AG04450 (cell line): ENCODE measurements at regions of chr9 and their contacts with region 1.

Region 1: DNA sequence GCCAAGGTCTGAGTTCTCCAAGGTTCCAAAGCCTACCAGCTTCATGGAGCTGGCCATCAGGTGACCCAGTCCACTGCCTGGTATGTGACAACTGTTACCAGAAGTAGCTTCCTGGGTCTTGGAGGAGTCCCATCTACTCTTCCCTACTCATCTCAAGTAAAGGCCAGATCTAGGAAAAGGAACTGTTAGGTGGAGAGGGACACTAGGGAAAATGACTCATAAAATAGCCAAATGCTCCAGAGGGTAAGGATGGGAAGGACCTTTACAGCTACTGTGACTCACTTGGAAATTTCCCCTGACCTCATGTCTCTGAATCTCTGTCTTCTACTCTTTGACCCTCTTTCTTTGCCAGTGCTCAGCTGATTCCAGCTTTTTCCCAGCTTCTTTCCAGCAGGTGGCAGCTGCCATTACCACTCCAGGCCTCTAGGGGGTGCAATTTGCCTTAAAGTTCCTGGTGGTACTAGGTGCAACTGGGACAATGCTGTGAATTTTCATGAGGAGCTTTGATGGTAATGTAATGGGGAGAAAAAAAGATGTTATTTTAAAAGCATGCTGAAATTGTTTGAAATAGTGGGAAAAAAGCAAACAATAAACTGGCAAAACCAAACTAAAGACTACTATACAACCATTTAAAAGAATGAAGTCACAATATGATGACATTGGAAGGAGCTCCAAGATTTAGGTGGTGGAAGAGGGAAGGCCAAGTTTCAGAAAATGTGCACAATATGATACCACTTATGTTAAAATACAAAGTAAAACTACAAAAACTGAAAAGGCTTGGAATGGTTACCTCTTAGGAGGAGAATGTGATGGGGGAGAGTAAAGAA is 27.1 kb upstream of the MYORG start:
- DNase-seq: peak; percentile 24
- H3K4me3 ChIP-seq: no peak overlapping the region
- H3K27ac ChIP-seq: no peak overlapping the region
- H3K27me3 ChIP-seq: no peaks in the 10 kb centered on the region
- CTCF ChIP-seq: peak; percentile 99

Region 2: GRCh38 chr9:34376596-34377403 is 27.0 kb before region 1 on chr9 and contains the start of gene MYORG:
- CTCF ChIA-PET with region 1: interaction called, 11 read pairs
- POLR2A ChIA-PET with region 1: no interaction called
- DNase-seq: peak; percentile 27
- H3K4me3 ChIP-seq: peak within 1 kb of the TSS; percentile 75
- H3K27ac ChIP-seq: no peak within 1 kb of the TSS
- H3K27me3 ChIP-seq: peaks cover 28% of the 10 kb centered on the region
- CTCF ChIP-seq: no peak
- polyA plus RNA-seq, gene MYORG: 0.19 and 0.22 TPM in 2 replicates

Region 3: GRCh38 chr9:34419716-34420504 is 16.1 kb after region 1 on chr9:
- CTCF ChIA-PET with region 1: interaction called, 67 read pairs
- POLR2A ChIA-PET with region 1: no interaction called
- DNase-seq: no peak
- H3K4me3 ChIP-seq: no peak overlapping the region
- H3K27ac ChIP-seq: no peak overlapping the region
- H3K27me3 ChIP-seq: no peaks in the 10 kb centered on the region
- CTCF ChIP-seq: no peak

Region 4: GRCh38 chr9:34446468-34446891 is 42.7 kb after region 1 on chr9:
- CTCF ChIA-PET with region 1: interaction called, 44 read pairs
- POLR2A ChIA-PET with region 1: no interaction called
- DNase-seq: no peak
- H3K4me3 ChIP-seq: no peak overlapping the region
- H3K27ac ChIP-seq: no peak overlapping the region
- H3K27me3 ChIP-seq: no peaks in the 10 kb centered on the region
- CTCF ChIP-seq: no peak

Region 5: DNA sequence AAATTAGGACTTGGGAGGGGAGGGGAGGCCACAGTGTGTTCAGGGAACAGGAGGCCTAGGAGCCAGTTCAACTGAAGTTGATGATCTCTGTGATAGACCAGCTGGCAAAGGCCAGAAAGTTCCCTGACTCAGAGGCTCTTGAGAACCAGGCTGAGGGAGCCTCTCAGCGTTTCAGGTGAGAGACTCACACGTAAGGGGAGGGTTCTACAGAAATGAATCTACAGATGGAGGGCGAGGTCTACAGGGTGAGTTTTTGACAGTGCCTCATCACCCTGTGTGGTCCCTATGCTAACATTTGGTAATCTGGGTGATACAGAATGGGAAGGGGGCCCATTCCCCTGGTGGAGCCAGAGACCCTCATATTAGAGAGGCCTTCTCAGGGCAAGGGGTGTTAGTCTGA is 87.0 kb after region 1 on chr9:
- CTCF ChIA-PET with region 1: interaction called, 139 read pairs
- POLR2A ChIA-PET with region 1: no interaction called
- DNase-seq: no peak
- H3K4me3 ChIP-seq: no peak overlapping the region
- H3K27ac ChIP-seq: no peak overlapping the region
- H3K27me3 ChIP-seq: peaks cover 22% of the 10 kb centered on the region
- CTCF ChIP-seq: no peak

Region 6: GRCh38 chr9:34591248-34591916 is 187.6 kb after region 1 on chr9:
- CTCF ChIA-PET with region 1: interaction called, 77 read pairs
- POLR2A ChIA-PET with region 1: no interaction called
- DNase-seq: peak; percentile 32
- H3K4me3 ChIP-seq: no peak overlapping the region
- H3K27ac ChIP-seq: no peak overlapping the region
- H3K27me3 ChIP-seq: peaks cover 74% of the 10 kb centered on the region
- CTCF ChIP-seq: peak; percentile 85